ENCODE measurements at regions of chr13 and their contacts with region 1.

Region 1: DNA sequence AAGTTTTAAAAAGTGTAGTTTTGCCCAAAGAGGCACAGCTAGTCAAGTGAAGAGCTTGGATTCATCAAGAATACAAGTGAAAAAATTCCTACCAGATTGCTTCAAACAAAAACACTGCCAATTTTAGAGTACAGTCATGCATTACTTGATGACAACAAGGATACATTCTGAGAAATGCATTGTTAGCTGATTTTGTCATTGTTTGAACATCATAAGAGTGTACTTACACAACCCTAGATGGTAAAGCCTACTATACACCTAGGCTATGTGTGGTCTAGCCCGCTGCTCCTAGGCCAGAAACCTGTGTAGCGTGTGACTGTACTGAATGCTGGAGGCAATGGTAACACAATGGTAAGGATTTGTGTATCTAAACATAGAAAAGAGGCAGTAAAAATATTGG is 41.1 kb downstream of the TMTC4 start:
- DNase-seq: peak; percentile 66
- H3K4me3 ChIP-seq: no peak overlapping the region
- H3K27me3 ChIP-seq: no peaks in the 10 kb centered on the region
- CTCF ChIP-seq: no peak

Region 2: DNA sequence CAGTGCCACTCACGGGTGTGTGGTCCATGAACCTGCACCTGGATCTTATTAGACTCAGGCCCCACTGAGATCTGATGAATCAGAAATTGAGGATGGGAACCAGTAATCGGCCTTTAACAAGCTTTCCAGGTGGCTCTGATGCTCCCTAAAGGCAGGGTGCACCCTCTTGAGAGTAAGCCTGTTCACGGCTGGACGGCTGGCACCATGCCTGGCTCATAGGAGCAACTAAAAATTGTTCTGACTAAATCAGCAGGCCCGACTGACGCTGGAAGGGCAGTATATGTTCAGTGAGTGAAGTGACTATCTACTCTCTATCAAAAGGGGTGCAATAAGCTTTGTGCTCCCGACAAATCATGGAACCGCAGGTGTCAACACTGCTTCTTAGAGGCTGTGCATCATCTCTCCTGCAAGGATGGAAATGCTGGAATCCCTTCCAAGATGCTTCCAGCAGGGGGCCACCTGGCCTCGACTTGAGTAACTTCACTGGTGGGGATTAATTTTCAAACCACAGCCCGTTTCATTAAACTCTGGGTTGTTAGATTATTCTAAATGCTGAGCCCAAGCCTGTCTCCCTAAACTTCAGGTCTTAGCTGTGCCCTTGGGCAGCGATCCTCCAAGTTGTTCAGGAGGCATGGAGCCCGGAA is 12.7 kb after region 1 on chr13:
- CTCF ChIA-PET with region 1: interaction called, 10 read pairs
- POLR2A ChIA-PET with region 1: no interaction called
- DNase-seq: no peak
- H3K4me3 ChIP-seq: no peak overlapping the region
- H3K27me3 ChIP-seq: no peaks in the 10 kb centered on the region
- CTCF ChIP-seq: peak; percentile 62

Region 3: DNA sequence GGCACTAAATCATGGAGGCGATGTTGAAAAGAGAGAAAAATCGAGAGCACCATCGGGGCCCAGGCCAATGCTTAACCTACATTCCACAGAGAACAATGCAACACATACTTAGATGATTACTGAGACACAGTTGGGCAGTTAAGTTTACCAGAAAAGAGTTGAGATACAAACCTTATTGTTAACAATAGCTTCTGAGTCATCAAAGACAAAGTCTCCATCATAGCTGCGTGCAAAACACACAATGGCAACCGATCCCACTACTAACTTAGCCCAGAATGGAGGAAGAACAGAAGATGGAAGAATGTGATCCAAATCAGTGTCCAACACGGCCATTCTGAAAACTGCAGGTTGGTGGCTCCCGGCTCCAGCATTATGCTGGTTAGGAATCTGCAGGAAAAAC is 34.9 kb after region 1 on chr13:
- CTCF ChIA-PET with region 1: no interaction called
- POLR2A ChIA-PET with region 1: interaction called, 13 read pairs
- DNase-seq: no peak
- H3K4me3 ChIP-seq: no peak overlapping the region
- H3K27me3 ChIP-seq: no peaks in the 10 kb centered on the region
- CTCF ChIP-seq: no peak